Dendritic cell treated with granulocyte-macrophage colony-stimulating factor and Interleukin-4, amounts not matched to agents 40 ng/mL and 50 ng/mL, for 4 days (primary cell): ENCODE measurements at regions of chr10 and their contacts with region 1.

Region 1: DNA sequence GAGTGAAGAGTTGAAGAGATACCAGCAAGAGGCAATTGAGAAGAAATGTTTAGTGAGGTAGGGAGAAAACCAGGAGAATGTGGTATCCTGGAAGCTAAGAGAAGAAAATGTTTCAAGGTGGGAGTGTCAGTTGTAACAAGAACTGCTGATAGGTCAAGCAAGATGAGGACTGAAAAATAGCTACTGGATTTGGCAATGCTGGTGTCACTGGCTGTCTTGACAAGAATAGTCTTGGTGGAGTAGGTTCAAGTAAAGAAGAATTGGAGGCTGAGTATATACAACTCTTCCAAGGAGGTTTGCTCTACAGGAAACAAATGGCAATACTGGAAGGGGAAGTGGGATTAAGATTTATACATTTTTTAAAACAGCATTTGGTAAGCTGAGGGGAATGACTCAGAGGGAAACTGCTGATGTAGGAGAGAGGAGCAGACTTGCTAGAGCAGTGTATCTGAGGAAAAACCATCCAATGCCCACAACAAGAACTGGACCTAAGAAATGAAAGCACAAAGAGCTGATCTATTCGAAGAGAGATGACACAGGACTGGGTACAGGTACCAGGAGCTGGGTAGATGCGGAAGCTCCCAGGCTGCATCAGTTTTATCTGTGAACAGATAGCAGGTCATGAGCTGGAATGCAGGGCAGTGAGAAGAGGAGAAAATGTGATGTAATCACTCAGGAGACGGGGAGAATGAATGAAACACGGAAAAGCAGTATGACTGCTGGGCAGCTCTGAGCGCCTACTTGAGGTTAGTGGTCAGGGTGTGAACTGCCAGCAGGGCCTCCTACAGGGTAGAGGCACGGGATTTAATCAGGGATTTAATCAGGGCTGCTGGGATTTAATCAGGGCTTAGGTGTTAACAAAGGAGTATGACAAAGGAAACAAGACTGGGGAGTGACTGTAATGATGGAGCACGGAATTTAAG is 34.5 kb downstream of the FAM25A start:
- H3K4me3 Mint-ChIP-seq: no peak overlapping the region
- H3K27ac Mint-ChIP-seq: no peak overlapping the region
- H3K4me1 Mint-ChIP-seq: no peaks in the 10 kb centered on the region
- H3K27me3 Mint-ChIP-seq: no peaks in the 10 kb centered on the region

Region 2: GRCh38 chr10:86888585-86889381 is 165.9 kb before region 1 on chr10:
- intact Hi-C with region 1: no loop called
- H3K4me3 Mint-ChIP-seq: no peak overlapping the region
- H3K27ac Mint-ChIP-seq: no peak overlapping the region
- H3K4me1 Mint-ChIP-seq: no peaks in the 10 kb centered on the region
- H3K27me3 Mint-ChIP-seq: no peaks in the 10 kb centered on the region

Region 3: DNA sequence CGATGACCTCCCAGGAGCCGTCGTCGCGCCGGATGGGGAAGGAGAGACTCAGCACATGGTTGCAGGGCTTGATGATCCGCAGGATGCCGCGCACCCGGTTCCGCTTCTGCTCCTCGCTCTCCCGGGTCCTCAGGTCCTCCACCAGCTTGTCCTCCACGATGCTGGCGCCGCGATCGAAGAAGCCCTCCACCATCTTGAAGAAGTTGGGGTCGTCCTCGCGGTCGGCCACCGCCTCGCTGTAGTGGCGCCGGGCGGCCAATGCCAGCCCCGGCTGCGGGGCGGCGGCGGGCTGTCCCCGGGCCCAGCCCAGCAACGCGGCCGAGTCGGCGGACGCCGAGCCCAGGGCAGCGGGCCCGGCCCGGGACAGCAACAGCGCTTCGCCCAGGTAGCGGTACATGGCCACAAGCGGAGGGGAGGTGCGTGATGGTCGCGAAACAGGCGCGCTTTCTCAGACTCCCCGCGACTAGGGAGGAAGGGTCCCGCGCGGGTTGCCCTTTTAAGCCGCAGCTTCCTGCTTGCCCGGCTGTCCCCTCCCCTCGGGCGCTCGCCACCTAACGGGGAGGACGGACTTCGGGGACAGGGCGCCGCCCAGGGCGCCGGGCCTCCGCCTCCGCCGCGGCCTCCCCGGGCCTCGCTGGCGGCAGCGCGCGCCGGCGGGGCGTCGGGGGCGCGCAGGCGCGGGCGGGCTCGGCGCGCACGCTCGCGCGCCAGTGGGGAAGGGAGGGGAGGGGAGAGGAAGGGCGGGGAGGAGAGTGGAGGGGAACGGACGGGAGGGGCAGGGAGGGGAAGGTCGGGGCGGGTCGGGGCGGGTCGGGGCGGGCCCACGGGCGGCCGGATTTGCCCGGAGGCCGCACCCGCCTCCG is 40.0 kb after region 1 on chr10 and contains the starts of genes GLUD1 and SHLD2:
- intact Hi-C with region 1: loop called (anchors 2 kb)
- H3K4me3 Mint-ChIP-seq: peak within 1 kb of the TSS; percentile 87
- H3K27ac Mint-ChIP-seq: peak within 1 kb of the TSS; percentile 92
- H3K4me1 Mint-ChIP-seq: peaks cover 41% of the 10 kb centered on the region
- H3K27me3 Mint-ChIP-seq: no peaks in the 10 kb centered on the region

Region 4: GRCh38 chr10:88027570-88027969 is 972.9 kb after region 1 on chr10:
- intact Hi-C with region 1: no loop called
- H3K4me3 Mint-ChIP-seq: no peak overlapping the region
- H3K27ac Mint-ChIP-seq: peak overlapping the region; percentile 31
- H3K4me1 Mint-ChIP-seq: peaks cover 32% of the 10 kb centered on the region
- H3K27me3 Mint-ChIP-seq: no peaks in the 10 kb centered on the region